ENCODE measurements at regions of chr4 and their contacts with region 1.

Region 1: GRCh38 chr4:185005216-185005819 is 13.0 kb upstream of the HELT start:
- DNase-seq: peak; percentile 59 to 69
- ATAC-seq: peak; percentile 94 to 97
- H3K4me3 ChIP-seq: peak overlapping the region; percentile 5 to 38 (median 20)
- H3K27ac ChIP-seq: no peak overlapping the region
- H3K4me1 ChIP-seq: peaks cover 0 to 11% of the 10 kb centered on the region in 2 donors
- H3K27me3 ChIP-seq: peaks cover 0 to 6% (median 5%) of the 10 kb centered on the region in 3 donors
- CTCF ChIP-seq: peak; percentile 71 to 95 (median 82)
- POLR2A ChIP-seq: no peak

Region 2: DNA sequence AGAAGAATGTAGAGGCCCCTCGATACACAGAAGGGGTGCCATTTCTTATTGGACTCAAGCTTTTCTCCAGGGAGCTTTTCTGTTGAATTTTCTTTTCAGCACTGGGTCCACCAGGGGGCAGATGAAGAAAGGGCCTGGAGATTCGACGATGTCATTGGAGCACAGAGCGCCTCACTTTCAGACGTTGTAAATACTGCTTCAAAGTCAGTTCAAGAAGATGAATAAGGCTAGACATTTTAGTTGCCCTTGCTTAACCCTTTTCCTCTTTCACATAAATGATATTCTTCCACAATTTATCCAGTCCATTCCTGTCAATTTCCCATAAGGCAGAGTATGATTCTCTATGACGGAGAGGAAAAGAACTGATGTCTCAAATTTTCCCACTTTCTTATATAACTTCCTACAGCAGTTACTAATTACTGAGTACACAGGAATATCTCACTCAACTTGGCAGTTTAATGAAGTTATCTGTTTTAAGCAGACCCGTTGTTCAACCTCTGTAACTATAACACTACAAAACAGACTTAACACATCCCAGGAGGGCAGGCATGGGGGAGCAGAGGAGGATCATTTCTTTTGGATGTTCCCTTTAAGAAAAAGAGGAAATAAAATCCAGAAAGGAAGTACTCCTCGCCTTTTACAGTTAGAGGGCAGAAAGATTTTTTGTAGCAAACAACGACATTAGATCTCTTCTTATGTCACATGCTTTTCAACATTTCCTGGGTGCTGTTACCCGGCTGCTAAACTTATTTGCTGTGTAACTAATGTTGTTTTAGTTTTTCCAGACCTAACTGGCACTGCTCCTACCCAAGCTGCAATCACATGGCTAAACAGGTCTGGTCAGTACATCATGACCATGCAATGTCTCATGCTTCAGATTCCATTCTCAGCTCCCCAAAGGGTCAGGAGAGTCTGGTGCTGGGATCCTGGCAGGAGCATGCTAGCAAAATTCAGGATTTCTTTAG is 259.2 kb before region 1 on chr4:
- in situ Hi-C with region 1: no loop called
- intact Hi-C with region 1: no loop called
- DNase-seq: peak; percentile 67 to 72
- ATAC-seq: peak; percentile 59 to 61
- H3K4me3 ChIP-seq: peak overlapping the region in 2 of 4 donors; percentile 7 to 15
- H3K27ac ChIP-seq: peak overlapping the region; percentile 74 to 85 (median 79)
- H3K4me1 ChIP-seq: peaks cover 29 to 31% of the 10 kb centered on the region in 2 donors
- H3K27me3 ChIP-seq: no peaks in the 10 kb centered on the region
- CTCF ChIP-seq: peak; percentile 65 to 79 (median 77)
- POLR2A ChIP-seq: peak in 1 of 2 donors; percentile 13

Region 3: GRCh38 chr4:185096032-185096653 is 90.8 kb after region 1 on chr4:
- in situ Hi-C with region 1: no loop called
- intact Hi-C with region 1: loop called (anchors 1 kb)
- DNase-seq: no peak
- ATAC-seq: peak in 1 of 2 donors; percentile 68
- H3K4me3 ChIP-seq: no peak overlapping the region
- H3K27ac ChIP-seq: no peak overlapping the region
- H3K4me1 ChIP-seq: no peaks in the 10 kb centered on the region
- H3K27me3 ChIP-seq: no peaks in the 10 kb centered on the region
- CTCF ChIP-seq: peak; percentile 29 to 67 (median 41)
- POLR2A ChIP-seq: no peak

Region 4: DNA sequence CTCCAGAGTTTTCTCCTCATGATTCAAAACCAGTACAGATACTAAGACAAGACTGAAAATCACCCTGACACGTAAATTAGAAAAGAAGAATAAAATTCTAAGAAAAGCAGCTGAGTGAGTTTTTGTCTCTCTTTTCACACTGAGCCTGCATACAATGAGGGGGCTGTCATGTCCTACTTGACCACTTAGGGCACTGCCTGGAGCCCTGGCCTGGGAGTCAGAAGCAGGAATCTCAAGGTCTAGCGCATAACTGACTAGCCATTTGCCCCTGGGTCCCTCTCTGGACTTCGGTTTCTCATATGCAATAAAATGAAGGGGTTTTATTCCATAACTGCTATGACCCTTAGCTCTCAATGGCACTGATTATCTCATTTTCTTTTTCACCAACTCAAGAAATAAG is 101.0 kb after region 1 on chr4:
- in situ Hi-C with region 1: no loop called
- intact Hi-C with region 1: no loop called
- DNase-seq: no peak
- ATAC-seq: no peak
- H3K4me3 ChIP-seq: no peak overlapping the region
- H3K27ac ChIP-seq: no peak overlapping the region
- H3K4me1 ChIP-seq: peaks cover 6 to 9% of the 10 kb centered on the region in 2 donors
- H3K27me3 ChIP-seq: no peaks in the 10 kb centered on the region
- CTCF ChIP-seq: no peak
- POLR2A ChIP-seq: no peak

Region 5: GRCh38 chr4:185183619-185184281 is 178.4 kb after region 1 on chr4:
- in situ Hi-C with region 1: no loop called
- intact Hi-C with region 1: loop called (anchors 5 kb)
- DNase-seq: peak; percentile 71 to 73
- ATAC-seq: peak; percentile 77 to 86
- H3K4me3 ChIP-seq: no peak overlapping the region
- H3K27ac ChIP-seq: peak overlapping the region in 1 of 4 donors; percentile 10
- H3K4me1 ChIP-seq: peaks cover 0 to 6% of the 10 kb centered on the region in 2 donors
- H3K27me3 ChIP-seq: no peaks in the 10 kb centered on the region
- CTCF ChIP-seq: peak; percentile 63 to 86 (median 73)
- POLR2A ChIP-seq: no peak

Measured in gastrocnemius medialis (tissue), 4 donors.